ENCODE measurements at regions of chr10 and their contacts with region 1.

Region 1: GRCh38 chr10:70906953-70907636 is 18.7 kb upstream of the PCBD1 start:
- DNase-seq: peak; percentile 34
- ATAC-seq: peak; percentile 8

Region 2: GRCh38 chr10:70815504-70816219 is 91.4 kb before region 1 on chr10 and contains the start of gene SGPL1:
- intact Hi-C with region 1: no loop called
- DNase-seq: peak; percentile 93
- ATAC-seq: peak; percentile 98
- total RNA-seq, gene SGPL1: 11.6 TPM

Region 3: DNA sequence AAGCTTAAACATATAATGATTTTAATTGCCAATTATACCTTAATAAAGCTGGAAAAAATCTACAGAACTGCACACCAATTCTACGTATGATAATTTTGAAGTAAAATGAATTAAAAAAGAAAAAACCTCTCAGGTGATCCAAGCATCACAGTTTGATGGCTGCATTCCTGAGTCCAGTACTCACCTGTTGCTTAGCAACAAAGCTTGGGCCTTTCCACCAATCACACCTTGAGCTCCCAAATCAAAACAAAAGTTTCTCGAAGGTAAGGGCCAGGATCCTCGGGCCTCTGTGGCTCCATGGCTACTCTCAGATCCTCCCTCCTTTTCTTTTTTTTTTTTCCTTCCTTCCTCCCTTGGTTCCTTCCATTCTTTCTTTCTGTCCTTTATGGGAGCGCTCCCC is 118.4 kb after region 1 on chr10:
- intact Hi-C with region 1: no loop called
- DNase-seq: no peak
- ATAC-seq: no peak

Region 4: DNA sequence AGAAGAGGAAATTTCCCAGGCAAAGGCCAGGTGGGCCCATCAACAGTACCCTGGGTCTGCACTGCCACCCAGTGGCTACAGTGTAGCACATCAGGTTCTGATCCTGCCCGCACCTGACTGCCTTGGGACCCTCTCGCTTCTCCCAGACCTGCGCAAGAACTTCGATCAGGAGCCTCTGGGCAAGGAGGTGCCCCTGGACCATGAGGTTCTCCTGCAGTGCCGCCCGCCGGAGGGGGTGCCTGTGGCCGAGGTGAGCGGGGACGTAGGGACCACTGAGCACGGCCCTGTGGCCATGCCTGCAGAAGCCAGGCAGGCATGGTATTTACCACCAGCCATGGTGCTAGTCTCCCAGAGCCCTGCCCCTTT is 378.1 kb after region 1 on chr10:
- intact Hi-C with region 1: loop called (anchors 5 kb)
- DNase-seq: no peak
- ATAC-seq: peak; percentile 81